Activated T-helper 1 cell treated with anti-CD3 and anti-CD28 coated beads, Interleukin-12 subunit alpha, Interleukin-12 subunit beta, Interleukin-2, Interleukin-4 antibody, amounts not matched to agents 30 ng/mL and 10 ng/mL and 1 ng/mL, durations not matched to agents 14 hours and 24 hours and 36 hours (primary cell): ENCODE measurements at regions of chr2 and their contacts with region 1.

Region 1: GRCh38 chr2:119366649-119367471 is at the starts of genes C2orf76 and DBI:
- DNase-seq: peak; percentile 93
- H3K4me3 Mint-ChIP-seq: peak within 1 kb of the TSS; percentile 99
- H3K27ac Mint-ChIP-seq: peak within 1 kb of the TSS; percentile 99
- H3K4me1 Mint-ChIP-seq: peaks cover 46% of the 10 kb centered on the region
- H3K27me3 Mint-ChIP-seq: no peaks in the 10 kb centered on the region
- total RNA-seq, gene C2orf76: 10.3 and 10.7 TPM in 2 replicates
- total RNA-seq, gene DBI: 142 and 146 TPM in 2 replicates

Region 2: DNA sequence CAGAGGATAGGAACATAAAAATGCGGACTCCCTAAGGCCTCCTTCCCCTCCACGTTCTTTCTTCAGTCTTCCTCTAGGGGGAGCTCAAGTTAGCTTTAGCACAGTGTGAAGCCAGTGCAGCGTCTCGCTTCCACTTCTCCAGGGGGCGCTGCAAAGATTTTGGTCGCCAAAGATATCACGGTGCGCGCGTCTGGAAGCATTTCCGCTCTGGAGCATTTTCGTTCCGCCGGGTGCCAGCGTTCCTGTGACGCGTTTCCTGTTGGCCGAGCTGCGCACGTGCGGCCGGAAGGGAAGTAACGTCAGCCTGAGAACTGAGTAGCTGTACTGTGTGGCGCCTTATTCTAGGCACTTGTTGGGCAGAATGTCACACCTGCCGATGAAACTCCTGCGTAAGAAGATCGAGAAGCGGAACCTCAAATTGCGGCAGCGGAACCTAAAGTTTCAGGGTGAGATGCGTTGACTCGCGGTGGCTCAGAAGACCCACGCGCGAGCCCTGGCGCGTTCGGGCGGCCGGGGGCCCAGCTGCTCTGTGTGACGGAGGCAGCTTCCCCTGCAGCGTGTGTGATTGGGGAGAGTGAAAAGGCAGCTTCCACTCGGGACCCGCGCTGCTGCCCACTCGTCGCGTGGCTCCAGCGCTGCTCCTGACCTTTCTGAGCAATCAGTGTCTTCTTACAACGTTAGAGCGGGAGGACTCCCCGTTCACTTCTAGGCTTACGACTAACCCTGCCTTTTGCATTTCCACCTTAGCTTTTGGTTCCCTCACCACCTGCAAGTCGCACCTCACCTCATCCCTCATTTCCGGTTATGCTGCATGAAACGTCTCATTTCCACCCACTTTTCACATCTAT is 1552.2 kb before region 1 on chr2 and contains the start of gene DDX18:
- intact Hi-C with region 1: loop called (anchors 2 kb)
- DNase-seq: peak; percentile 96
- H3K4me3 Mint-ChIP-seq: peak within 1 kb of the TSS; percentile 90
- H3K27ac Mint-ChIP-seq: peak within 1 kb of the TSS; percentile 94
- H3K4me1 Mint-ChIP-seq: peaks cover 40% of the 10 kb centered on the region
- H3K27me3 Mint-ChIP-seq: peaks cover 3% of the 10 kb centered on the region
- total RNA-seq, gene DDX18: 133 and 143 TPM in 2 replicates

Region 3: DNA sequence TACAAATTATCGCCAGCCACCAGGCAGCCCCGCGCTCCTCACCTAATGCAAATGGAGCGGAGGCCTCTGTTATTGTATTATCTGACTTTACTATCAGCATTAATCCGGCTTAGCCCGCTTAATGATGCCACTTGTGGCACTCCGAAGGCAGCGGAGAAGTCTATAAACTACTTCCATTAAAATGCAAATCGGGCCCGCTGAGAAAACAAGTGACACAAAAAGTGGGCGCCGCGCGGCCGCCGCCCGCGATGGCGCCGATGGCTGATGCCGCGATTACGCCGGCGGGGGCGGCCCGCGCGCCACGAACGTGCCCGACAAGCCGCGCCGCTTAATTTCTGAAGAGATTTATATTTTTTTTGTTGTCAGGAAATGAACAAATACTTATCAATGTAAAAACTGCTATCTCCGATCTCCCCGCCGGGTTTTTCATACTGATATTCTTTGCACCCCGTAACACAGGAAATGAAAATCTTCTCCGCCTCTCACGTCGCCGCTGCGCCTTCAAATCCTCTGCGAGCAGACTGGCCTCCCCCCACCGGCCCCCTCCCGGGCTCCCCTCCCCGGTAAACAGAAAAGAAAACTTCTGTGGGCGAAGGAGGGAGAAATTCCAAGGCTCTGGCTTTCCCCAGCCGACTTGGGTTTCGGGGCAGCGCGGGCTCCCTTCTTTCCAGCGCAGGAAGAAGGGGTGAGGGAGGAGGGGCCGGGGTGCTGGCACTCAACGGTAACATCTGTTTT is 1056.7 kb before region 1 on chr2:
- intact Hi-C with region 1: loop called (anchors 5 kb)
- DNase-seq: peak; percentile 55
- H3K4me3 Mint-ChIP-seq: peak overlapping the region; percentile 83
- H3K27ac Mint-ChIP-seq: peak overlapping the region; percentile 89
- H3K4me1 Mint-ChIP-seq: no peaks in the 10 kb centered on the region
- H3K27me3 Mint-ChIP-seq: peaks cover 25% of the 10 kb centered on the region

Region 4: GRCh38 chr2:119311356-119311755 is 55.5 kb before region 1 on chr2:
- intact Hi-C with region 1: no loop called
- DNase-seq: no peak
- H3K4me3 Mint-ChIP-seq: no peak overlapping the region
- H3K27ac Mint-ChIP-seq: no peak overlapping the region
- H3K4me1 Mint-ChIP-seq: no peaks in the 10 kb centered on the region
- H3K27me3 Mint-ChIP-seq: no peaks in the 10 kb centered on the region

Region 5: DNA sequence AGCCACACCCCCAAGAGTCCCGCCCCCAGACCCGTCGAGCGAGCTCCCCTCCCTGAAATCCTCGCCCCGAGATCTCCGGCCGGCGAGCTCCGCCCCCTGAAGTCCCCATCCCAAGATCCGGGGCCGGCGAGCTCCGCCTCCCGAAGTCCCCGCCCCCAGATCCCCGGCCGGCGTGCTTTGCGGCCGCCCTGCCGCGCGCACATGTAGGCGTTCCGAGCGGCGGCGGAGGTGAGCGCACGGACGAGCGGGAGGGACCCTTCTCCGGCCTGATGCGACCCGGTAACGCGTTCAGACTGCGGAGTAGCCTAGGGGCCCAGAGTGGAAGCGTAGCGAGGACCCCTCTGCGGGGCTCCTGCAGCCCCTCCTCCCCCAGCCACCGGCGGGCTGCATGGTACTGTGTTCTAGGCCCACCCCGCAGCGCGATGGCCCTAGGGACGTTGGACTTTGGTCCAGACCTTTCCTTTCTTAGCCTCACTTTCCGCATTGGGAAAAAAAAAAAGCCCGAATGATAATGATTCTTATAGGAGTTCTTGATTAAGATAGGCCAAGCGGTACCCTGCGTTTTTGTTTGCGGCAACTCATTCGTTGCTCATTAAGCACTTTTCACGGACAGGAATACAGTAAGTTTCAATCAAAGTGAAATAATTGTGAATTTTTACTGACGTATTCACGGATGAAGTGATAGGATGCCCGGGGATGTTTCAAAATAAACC is 312.3 kb after region 1 on chr2 and contains the start of gene TMEM177:
- intact Hi-C with region 1: loop called (anchors 1 kb)
- DNase-seq: peak; percentile 90
- H3K4me3 Mint-ChIP-seq: peak within 1 kb of the TSS; percentile 96
- H3K27ac Mint-ChIP-seq: peak within 1 kb of the TSS; percentile 85
- H3K4me1 Mint-ChIP-seq: peaks cover 25% of the 10 kb centered on the region
- H3K27me3 Mint-ChIP-seq: peaks cover 4% of the 10 kb centered on the region
- total RNA-seq, gene TMEM177: 16.6 and 17.4 TPM in 2 replicates

Region 6: DNA sequence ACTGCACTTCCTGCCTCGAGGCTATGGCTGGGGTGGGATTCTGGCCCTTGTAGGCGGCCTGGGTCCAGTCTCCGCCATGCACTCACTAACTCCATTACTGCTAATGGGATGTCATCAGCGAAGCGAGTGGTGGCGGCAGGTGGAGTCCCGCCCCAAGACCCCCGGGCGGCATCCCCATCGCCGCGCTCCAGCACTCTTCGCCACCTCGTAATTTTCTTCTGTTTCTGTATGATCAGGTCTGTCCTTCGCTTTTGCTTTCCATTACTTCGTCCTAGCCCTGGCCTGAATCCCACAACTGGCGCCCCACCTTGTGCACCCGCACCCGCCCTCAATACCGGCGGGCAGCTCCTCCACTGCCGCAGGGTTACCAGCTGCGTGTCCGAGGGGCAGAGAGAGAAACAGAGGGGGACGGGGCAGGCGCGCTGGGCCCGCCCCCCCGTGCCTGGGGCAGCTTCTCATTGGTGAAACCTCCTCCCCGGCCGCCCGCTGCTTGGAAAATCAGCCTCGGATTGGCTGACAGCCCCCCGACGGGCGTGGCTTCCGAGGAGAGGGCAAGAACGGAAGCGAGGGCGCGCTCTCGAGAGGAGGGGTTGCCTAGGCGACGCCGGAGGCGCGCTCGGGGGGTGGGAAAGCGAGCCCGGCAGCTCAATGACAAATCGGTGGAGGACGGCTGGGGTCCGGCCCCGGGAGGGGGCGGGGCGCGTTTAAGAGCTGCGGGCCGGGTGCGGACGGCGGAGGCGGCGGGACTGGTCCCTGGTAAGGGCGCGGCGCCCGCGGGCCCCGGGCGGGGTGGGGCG is 885.6 kb after region 1 on chr2 and contains the start of gene RALB:
- intact Hi-C with region 1: loop called (anchors 5 kb)
- DNase-seq: peak; percentile 99
- H3K4me3 Mint-ChIP-seq: peak within 1 kb of the TSS; percentile 98
- H3K27ac Mint-ChIP-seq: peak within 1 kb of the TSS; percentile 95
- H3K4me1 Mint-ChIP-seq: peaks cover 85% of the 10 kb centered on the region
- H3K27me3 Mint-ChIP-seq: peaks cover 10% of the 10 kb centered on the region
- total RNA-seq, gene RALB: 79.7 and 84.2 TPM in 2 replicates